Natural killer cell (primary cell): ENCODE measurements at regions of chr11 and their contacts with region 1.

Region 1: DNA sequence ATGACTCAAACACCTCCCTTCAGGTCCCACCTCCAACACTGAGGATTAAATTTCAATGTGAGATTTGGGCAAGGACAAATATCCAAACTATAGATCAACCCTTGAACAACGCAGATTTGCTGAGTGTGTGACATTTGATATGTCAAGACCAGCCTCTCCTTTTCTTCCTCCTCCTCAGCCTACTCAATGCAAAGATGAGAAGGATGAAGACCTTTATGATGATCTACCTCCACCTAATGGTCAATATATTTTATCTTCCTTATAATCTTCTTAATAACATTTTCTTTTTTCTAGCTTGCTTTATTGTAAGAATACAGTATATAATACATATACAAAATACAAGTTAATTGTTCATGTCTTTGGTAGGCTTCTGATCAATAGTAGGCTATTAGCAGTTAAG is 67.5 kb upstream of the MPPED2 start:
- DNase-seq: no peak
- ATAC-seq: no peak
- H3K4me3 ChIP-seq: no peak overlapping the region
- H3K4me3 Mint-ChIP-seq: no peak overlapping the region
- H3K27ac ChIP-seq: no peak overlapping the region
- H3K27ac Mint-ChIP-seq: no peak overlapping the region
- H3K4me1 ChIP-seq: no peaks in the 10 kb centered on the region
- H3K4me1 Mint-ChIP-seq: no peaks in the 10 kb centered on the region
- H3K27me3 ChIP-seq: no peaks in the 10 kb centered on the region
- H3K27me3 Mint-ChIP-seq: peaks cover 0 to 5% of the 10 kb centered on the region in 2 donors
- CTCF ChIP-seq: no peak

Region 2: GRCh38 chr11:30710221-30710620 is 56.6 kb after region 1 on chr11:
- intact Hi-C with region 1: loop called (anchors 10 kb)
- DNase-seq: no peak
- ATAC-seq: no peak
- H3K4me3 ChIP-seq: no peak overlapping the region
- H3K4me3 Mint-ChIP-seq: no peak overlapping the region
- H3K27ac ChIP-seq: no peak overlapping the region
- H3K27ac Mint-ChIP-seq: no peak overlapping the region
- H3K4me1 ChIP-seq: no peaks in the 10 kb centered on the region
- H3K4me1 Mint-ChIP-seq: no peaks in the 10 kb centered on the region
- H3K27me3 ChIP-seq: no peaks in the 10 kb centered on the region
- H3K27me3 Mint-ChIP-seq: no peaks in the 10 kb centered on the region
- CTCF ChIP-seq: no peak